ENCODE measurements at regions of chr5 and their contacts with region 1.

Region 1: DNA sequence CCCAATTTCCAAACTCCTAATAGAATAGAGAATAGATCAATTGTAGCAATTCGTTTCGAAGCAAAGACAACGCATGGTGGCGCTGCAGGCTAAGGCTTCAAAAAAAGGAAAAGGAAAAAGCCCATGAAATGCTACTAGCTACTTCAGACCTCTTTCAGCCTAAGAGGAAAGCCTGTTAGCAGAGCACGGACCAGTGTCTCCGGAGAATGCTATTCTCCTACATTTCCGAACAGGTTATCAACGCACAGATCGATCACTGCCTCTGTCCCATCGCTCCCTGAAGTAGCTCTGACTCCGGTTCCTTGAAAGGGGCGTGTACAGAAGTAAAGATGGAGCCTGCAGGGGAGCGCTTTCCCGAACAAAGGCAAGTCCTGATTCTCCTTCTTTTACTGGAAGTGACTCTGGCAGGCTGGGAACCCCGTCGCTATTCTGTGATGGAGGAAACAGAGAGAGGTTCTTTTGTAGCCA is at the start of gene PCDHB15:
- DNase-seq: peak in 1 of 2 experiments; percentile 83
- H3K4me3 ChIP-seq: peak within 1 kb of the TSS; percentile 19 to 69 (median 44); a peak in 7 of 8 replicates
- H3K27ac ChIP-seq: no peak within 1 kb of the TSS
- H3K4me1 ChIP-seq: peaks cover 0 to 3% (median 0%) of the 10 kb centered on the region in 4 experiments; a peak in 1 of 7 replicates
- H3K27me3 ChIP-seq: no peaks in the 10 kb centered on the region
- CTCF ChIP-seq: peak in 2 of 3 experiments; percentile 61 to 64; a peak in 3 of 4 replicates
- EP300 ChIP-seq: no peak
- POLR2A ChIP-seq: peak in 1 of 2 experiments; percentile 55; a peak in 1 of 3 replicates
- RAD21 ChIP-seq: peak; percentile 78 to 80
- total RNA-seq, gene PCDHB15: 3.9 and 4.0 TPM in 2 replicates

Region 2: DNA sequence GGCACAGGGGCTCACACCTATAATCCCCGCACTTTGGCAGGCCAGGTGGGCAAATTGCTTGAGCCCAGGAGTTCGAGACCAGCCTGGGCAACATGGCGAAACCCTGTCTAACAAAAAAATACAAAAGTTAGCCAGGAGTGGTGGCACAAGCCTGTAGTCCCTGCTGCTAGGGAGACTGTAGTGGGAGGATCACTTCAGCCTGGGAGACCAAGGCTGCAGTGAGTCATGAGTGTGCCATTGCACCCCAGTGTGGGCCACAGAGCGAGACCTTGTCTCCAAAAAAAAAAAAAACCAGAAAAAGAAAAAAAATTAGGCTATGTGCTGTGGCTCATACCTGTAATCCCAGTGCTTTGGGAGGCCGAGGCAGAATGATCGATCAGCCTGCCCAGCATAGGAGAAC is 756.4 kb before region 1 on chr5:
- CTCF ChIA-PET with region 1: no interaction called
- POLR2A ChIA-PET with region 1: no interaction called
- DNase-seq: no peak
- H3K4me3 ChIP-seq: no peak overlapping the region
- H3K27ac ChIP-seq: no peak overlapping the region
- H3K4me1 ChIP-seq: no peaks in the 10 kb centered on the region
- H3K27me3 ChIP-seq: no peaks in the 10 kb centered on the region
- CTCF ChIP-seq: no peak
- EP300 ChIP-seq: no peak
- POLR2A ChIP-seq: no peak
- RAD21 ChIP-seq: no peak

Region 3: GRCh38 chr5:141192110-141192732 is 53.1 kb before region 1 on chr5 and contains the start of gene PCDHB10:
- CTCF ChIA-PET with region 1: interaction called, 25 read pairs
- POLR2A ChIA-PET with region 1: no interaction called
- DNase-seq: peak in 1 of 2 experiments; percentile 92
- H3K4me3 ChIP-seq: peak within 1 kb of the TSS; percentile 14 to 46 (median 35); a peak in 6 of 8 replicates
- H3K27ac ChIP-seq: no peak within 1 kb of the TSS
- H3K4me1 ChIP-seq: no peaks in the 10 kb centered on the region; a peak in 1 of 7 replicates
- H3K27me3 ChIP-seq: no peaks in the 10 kb centered on the region
- CTCF ChIP-seq: peak; percentile 72 to 83 (median 83)
- EP300 ChIP-seq: no peak
- POLR2A ChIP-seq: no peak
- RAD21 ChIP-seq: peak; percentile 82 to 84
- total RNA-seq, gene PCDHB10: 1.8 and 1.9 TPM in 2 replicates

Region 4: GRCh38 chr5:141234109-141234667 is 11.1 kb before region 1 on chr5:
- CTCF ChIA-PET with region 1: interaction called, 26 read pairs
- POLR2A ChIA-PET with region 1: interaction called, 3 read pairs
- DNase-seq: no peak
- H3K4me3 ChIP-seq: no peak overlapping the region
- H3K27ac ChIP-seq: no peak overlapping the region
- H3K4me1 ChIP-seq: no peaks in the 10 kb centered on the region
- H3K27me3 ChIP-seq: no peaks in the 10 kb centered on the region
- CTCF ChIP-seq: no peak
- EP300 ChIP-seq: no peak
- POLR2A ChIP-seq: no peak
- RAD21 ChIP-seq: peak; percentile 37 to 59

Region 5: DNA sequence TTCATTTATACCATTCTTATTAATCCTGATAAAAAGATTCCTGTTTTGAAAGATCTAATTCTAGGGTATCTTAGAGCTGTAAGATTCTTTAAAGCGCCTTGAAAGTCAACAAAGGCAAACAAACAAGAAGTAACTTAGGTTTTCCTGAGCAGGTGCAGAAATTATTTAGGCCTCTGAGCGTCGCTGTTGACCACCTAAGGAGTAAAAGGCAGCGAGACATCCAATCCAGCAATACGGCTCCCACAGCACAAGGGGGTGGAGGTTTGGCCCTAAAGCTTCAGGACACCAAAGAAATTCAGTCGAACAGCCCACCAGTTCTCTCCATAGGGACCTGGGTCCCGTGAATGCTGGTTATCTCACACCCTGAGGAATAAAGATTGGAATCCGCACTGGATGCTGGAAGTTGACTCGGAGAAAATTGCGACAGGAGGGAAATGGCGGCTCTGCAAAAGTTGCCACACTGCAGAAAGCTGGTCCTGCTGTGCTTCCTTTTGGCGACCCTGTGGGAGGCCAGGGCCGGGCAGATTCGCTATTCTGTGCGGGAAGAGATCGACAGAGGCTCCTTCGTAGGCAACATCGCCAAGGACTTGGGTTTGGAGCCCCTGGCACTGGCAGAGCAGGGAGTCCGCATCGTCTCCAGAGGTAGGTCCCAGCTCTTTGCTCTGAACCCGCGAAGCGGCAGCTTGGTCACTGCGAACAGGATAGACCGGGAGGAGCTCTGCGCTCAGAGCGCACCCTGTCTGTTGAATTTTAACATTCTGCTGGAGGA is 93.4 kb after region 1 on chr5 and contains the start of gene PCDHGA2:
- CTCF ChIA-PET with region 1: interaction called, 22 read pairs
- POLR2A ChIA-PET with region 1: no interaction called
- DNase-seq: no peak
- H3K4me3 ChIP-seq: no peak within 1 kb of the TSS
- H3K27ac ChIP-seq: no peak within 1 kb of the TSS
- H3K4me1 ChIP-seq: no peaks in the 10 kb centered on the region
- H3K27me3 ChIP-seq: no peaks in the 10 kb centered on the region
- CTCF ChIP-seq: peak; percentile 10 to 77 (median 60)
- EP300 ChIP-seq: no peak
- POLR2A ChIP-seq: no peak
- RAD21 ChIP-seq: peak; percentile 58 to 65
- total RNA-seq, gene PCDHGA2: 0.31 and 0.32 TPM in 2 replicates

Region 6: GRCh38 chr5:141420855-141421496 is 175.7 kb after region 1 on chr5 and contains the start of gene PCDHGA11:
- CTCF ChIA-PET with region 1: interaction called, 26 read pairs
- POLR2A ChIA-PET with region 1: no interaction called
- DNase-seq: peak in 1 of 2 experiments; percentile 91
- H3K4me3 ChIP-seq: peak within 1 kb of the TSS; percentile 15 to 52 (median 32); a peak in 6 of 8 replicates
- H3K27ac ChIP-seq: no peak within 1 kb of the TSS
- H3K4me1 ChIP-seq: no peaks in the 10 kb centered on the region; a peak in 1 of 7 replicates
- H3K27me3 ChIP-seq: peaks cover 0 to 12% (median 6%) of the 10 kb centered on the region in 4 experiments; a peak in 4 of 7 replicates
- CTCF ChIP-seq: peak; percentile 59 to 77 (median 75)
- EP300 ChIP-seq: no peak
- POLR2A ChIP-seq: no peak
- RAD21 ChIP-seq: peak; percentile 88 to 90
- total RNA-seq, gene PCDHGA11: 8.2 and 8.3 TPM in 2 replicates

Region 7: GRCh38 chr5:141564216-141564692 is 319.0 kb after region 1 on chr5:
- CTCF ChIA-PET with region 1: interaction called, 33 read pairs
- POLR2A ChIA-PET with region 1: interaction called, 9 read pairs
- DNase-seq: peak; percentile 56 to 62
- H3K4me3 ChIP-seq: no peak overlapping the region
- H3K27ac ChIP-seq: peak overlapping the region; percentile 26; the same call in 1 of the 2 replicates
- H3K4me1 ChIP-seq: peaks cover 0 to 7% (median 3%) of the 10 kb centered on the region in 4 experiments; a peak in 4 of 7 replicates
- H3K27me3 ChIP-seq: no peaks in the 10 kb centered on the region
- CTCF ChIP-seq: peak in 2 of 3 experiments; percentile 96; a peak in 3 of 4 replicates
- EP300 ChIP-seq: peak in 1 of 2 experiments; percentile 89; a peak in 2 of 3 replicates
- POLR2A ChIP-seq: no peak
- RAD21 ChIP-seq: peak; percentile 55 to 65

Measured in H1 (cell line).